ENCODE measurements at regions of chr5 and their contacts with region 1.

Region 1: DNA sequence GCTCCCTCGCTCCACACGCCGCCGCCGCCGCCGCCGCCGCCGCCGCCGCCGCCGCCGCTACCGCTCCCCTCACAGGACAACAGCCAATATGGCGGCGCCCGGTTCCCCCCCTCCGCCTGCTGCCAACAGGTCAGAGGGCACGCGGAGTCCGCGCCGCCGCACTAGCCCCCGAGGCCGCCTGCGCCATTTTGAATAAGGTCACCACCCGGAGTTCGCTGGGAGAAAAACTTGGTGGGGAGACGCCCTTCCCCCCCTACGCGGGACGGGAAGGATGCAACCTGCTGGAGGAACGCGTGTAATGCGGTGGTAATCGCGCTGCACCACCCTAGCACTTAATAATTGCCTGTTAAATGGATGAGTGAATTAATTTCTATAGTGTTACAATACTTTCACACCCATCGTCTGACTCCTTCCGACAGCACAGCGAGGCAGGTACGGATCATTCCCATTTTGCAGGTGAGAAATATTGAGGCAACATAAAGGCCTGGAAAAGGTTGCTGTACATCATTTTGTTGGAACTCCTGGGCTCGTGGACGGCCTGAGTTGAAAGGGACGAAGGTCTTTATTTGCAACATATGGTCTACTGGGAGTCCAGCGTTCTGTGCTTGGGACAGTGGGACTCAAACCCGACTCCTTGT is at the start of gene FAM193B:
- DNase-seq: peak; percentile 88 to 97 (median 94)
- ATAC-seq: peak; percentile 99
- H3K4me3 ChIP-seq: peak within 1 kb of the TSS; percentile 62 to 80
- H3K4me3 Mint-ChIP-seq: peak within 1 kb of the TSS; percentile 89
- H3K27ac ChIP-seq: peak within 1 kb of the TSS; percentile 38 to 49
- H3K27ac Mint-ChIP-seq: peak within 1 kb of the TSS; percentile 82
- H3K4me1 ChIP-seq: peaks cover 20% of the 10 kb centered on the region
- H3K4me1 Mint-ChIP-seq: peaks cover 34% of the 10 kb centered on the region
- H3K27me3 ChIP-seq: no peaks in the 10 kb centered on the region
- H3K27me3 Mint-ChIP-seq: no peaks in the 10 kb centered on the region
- CTCF ChIP-seq: no peak
- total RNA-seq, gene FAM193B: 136 to 141 TPM

Region 2: DNA sequence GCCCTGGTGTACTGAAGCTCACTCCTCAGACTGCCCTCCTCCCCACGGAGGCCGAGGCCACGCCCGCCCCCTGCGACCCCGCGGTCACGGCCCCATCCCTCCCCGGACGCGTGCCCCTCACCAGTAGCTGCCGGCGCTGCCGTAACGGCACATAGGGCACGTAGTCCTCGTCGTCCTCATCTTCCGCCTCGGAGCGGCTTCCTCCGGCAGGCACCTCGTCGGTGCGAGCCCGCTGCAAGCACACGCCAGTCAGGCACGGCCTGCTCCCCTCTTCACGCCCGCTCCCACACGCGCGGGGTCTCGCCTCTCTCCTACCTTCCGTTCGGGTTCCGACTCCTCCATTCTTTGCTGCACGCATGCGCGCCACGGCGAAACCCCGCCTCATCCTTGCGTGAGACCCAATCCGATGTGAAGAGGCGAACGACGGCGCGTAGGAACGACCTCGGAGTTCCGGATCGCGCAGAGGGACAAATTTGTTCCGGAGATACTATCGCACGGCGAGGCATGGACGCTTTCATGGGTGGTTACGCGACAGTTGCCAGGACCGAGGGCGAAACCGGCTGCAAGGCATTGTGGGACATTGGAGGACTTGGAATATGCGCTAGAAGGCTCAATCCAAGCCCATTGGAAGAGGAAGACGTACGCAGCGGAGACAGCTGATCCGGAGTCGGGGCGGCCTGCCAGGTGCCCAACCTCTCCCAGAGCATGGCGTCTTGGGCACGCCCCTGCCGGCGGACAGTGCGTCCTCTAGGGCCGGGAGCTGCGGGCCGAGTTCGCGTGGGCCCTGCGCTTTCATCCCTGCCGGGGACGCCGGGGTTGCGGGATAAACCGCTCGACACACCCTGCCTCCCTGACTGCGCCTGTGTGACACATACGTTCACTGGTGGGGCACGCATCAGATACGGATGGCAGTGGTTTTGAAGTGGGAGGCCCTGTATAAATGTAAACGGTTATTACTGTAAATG is 37.7 kb before region 1 on chr5 and contains the start of gene DDX41:
- CTCF ChIA-PET with region 1: no interaction called
- POLR2A ChIA-PET with region 1: no interaction called
- intact Hi-C with region 1: loop called (anchors 1 kb)
- DNase-seq: peak; percentile 88 to 98 (median 95)
- ATAC-seq: peak; percentile 88
- H3K4me3 ChIP-seq: peak within 1 kb of the TSS; percentile 95
- H3K4me3 Mint-ChIP-seq: peak within 1 kb of the TSS; percentile 94
- H3K27ac ChIP-seq: peak within 1 kb of the TSS; percentile 61 to 73
- H3K27ac Mint-ChIP-seq: peak within 1 kb of the TSS; percentile 93
- H3K4me1 ChIP-seq: peaks cover 31% of the 10 kb centered on the region
- H3K4me1 Mint-ChIP-seq: peaks cover 46% of the 10 kb centered on the region
- H3K27me3 ChIP-seq: no peaks in the 10 kb centered on the region
- H3K27me3 Mint-ChIP-seq: no peaks in the 10 kb centered on the region
- CTCF ChIP-seq: no peak
- total RNA-seq, gene DDX41: 66.8 to 71.0 TPM

Region 3: GRCh38 chr5:177539411-177539810 is 15.2 kb before region 1 on chr5:
- CTCF ChIA-PET with region 1: no interaction called
- POLR2A ChIA-PET with region 1: no interaction called
- intact Hi-C with region 1: no loop called
- DNase-seq: no peak
- ATAC-seq: no peak
- H3K4me3 ChIP-seq: no peak overlapping the region
- H3K4me3 Mint-ChIP-seq: no peak overlapping the region
- H3K27ac ChIP-seq: no peak overlapping the region
- H3K27ac Mint-ChIP-seq: no peak overlapping the region
- H3K4me1 ChIP-seq: no peaks in the 10 kb centered on the region
- H3K4me1 Mint-ChIP-seq: peaks cover 12% of the 10 kb centered on the region
- H3K27me3 ChIP-seq: no peaks in the 10 kb centered on the region
- H3K27me3 Mint-ChIP-seq: no peaks in the 10 kb centered on the region
- CTCF ChIP-seq: no peak

Region 4: DNA sequence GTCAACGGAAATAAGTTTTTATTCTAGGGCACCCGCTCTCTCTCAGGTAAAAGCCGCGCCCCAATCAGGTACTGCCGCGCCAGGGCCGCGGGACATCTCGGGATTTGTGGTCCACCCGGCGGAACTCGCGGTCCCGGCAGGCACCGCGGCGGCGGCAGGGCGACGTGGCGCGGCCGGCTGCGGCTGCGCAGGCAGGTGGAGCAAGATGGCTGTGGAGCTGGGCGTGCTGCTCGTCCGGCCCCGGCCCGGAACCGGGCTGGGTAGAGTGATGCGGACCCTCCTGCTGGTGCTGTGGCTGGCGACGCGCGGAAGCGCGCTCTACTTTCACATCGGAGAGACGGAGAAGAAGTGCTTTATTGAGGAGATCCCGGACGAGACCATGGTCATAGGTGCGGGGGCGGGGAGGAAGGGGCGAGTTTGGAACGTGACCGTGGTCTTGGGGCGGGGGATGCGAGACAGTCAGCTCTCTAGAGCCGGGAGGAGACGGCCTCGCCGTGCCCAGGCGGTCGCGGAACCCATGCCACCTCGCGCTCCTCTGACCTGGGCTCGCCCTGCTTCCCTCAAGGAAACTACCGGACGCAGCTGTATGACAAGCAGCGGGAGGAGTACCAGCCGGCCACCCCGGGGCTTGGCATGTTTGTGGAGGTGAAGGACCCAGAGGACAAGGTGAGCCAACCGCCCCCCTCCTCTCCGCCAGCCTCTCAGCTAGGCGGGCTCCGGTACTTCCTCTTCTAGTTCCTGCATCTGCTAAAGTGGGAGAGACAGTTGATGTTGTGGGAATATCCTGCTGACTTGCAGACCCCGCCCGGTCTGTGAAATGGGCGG is 37.6 kb after region 1 on chr5 and contains the start of gene TMED9:
- CTCF ChIA-PET with region 1: no interaction called
- POLR2A ChIA-PET with region 1: no interaction called
- intact Hi-C with region 1: loop called (anchors 1 to 2 kb)
- DNase-seq: peak; percentile 69 to 92 (median 86)
- ATAC-seq: peak; percentile 98
- H3K4me3 ChIP-seq: peak within 1 kb of the TSS; percentile 97 to 100
- H3K4me3 Mint-ChIP-seq: peak within 1 kb of the TSS; percentile 99
- H3K27ac ChIP-seq: peak within 1 kb of the TSS; percentile 78 to 88
- H3K27ac Mint-ChIP-seq: peak within 1 kb of the TSS; percentile 93
- H3K4me1 ChIP-seq: peaks cover 19% of the 10 kb centered on the region
- H3K4me1 Mint-ChIP-seq: peaks cover 24% of the 10 kb centered on the region
- H3K27me3 ChIP-seq: peaks cover 0 to 3% of the 10 kb centered on the region in 2 experiments
- H3K27me3 Mint-ChIP-seq: peaks cover 13% of the 10 kb centered on the region
- CTCF ChIP-seq: no peak
- total RNA-seq, gene TMED9: 42.4 to 52.2 TPM

Region 5: DNA sequence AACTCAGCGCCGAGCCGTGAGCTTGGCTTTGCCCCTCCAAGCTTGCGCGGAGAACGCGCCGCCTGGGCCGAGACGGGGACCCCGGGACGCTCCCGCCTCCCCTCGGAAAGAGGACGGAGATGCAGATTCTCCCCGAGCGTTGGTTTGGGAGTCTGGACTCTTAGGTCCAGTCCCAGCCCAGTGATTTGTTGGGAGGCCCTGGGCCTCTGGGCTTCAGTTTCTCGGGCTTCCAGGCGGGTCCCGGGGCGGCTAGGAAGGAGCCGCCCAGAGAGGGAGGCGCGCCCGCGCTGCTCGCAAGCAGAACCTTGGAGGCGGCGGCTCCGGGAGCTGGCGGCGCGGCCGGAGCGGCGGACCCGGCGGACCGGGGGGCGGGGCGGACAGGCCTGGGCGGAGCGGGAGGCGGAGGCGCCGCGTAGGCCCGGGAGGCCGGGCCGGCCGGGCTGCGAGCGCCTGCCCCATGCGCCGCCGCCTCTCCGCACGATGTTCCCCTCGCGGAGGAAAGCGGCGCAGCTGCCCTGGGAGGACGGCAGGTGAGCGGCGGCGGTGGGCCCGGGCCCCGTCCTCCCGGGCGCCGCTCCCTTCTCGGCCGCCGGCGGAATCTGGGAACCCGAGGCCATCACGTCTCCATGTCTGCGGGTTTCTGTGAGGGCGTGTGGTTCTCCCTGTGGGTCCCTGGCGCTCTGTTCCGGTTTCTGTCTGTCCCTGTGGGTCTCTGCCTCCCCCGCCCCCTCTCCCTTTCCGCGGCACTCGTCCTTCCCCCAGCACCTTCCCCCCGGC is 45.3 kb after region 1 on chr5 and contains the start of gene B4GALT7:
- CTCF ChIA-PET with region 1: no interaction called
- POLR2A ChIA-PET with region 1: no interaction called
- intact Hi-C with region 1: loop called in 1 of 2 experiments (anchors 2 kb)
- DNase-seq: peak; percentile 73 to 94 (median 82)
- ATAC-seq: peak; percentile 91
- H3K4me3 ChIP-seq: peak within 1 kb of the TSS; percentile 90 to 92
- H3K4me3 Mint-ChIP-seq: peak within 1 kb of the TSS; percentile 90
- H3K27ac ChIP-seq: peak within 1 kb of the TSS; percentile 65 to 78
- H3K27ac Mint-ChIP-seq: peak within 1 kb of the TSS; percentile 83
- H3K4me1 ChIP-seq: peaks cover 13% of the 10 kb centered on the region
- H3K4me1 Mint-ChIP-seq: peaks cover 29% of the 10 kb centered on the region
- H3K27me3 ChIP-seq: no peaks in the 10 kb centered on the region
- H3K27me3 Mint-ChIP-seq: no peaks in the 10 kb centered on the region
- CTCF ChIP-seq: no peak
- total RNA-seq, gene B4GALT7: 33.4 to 36.6 TPM

Region 6: DNA sequence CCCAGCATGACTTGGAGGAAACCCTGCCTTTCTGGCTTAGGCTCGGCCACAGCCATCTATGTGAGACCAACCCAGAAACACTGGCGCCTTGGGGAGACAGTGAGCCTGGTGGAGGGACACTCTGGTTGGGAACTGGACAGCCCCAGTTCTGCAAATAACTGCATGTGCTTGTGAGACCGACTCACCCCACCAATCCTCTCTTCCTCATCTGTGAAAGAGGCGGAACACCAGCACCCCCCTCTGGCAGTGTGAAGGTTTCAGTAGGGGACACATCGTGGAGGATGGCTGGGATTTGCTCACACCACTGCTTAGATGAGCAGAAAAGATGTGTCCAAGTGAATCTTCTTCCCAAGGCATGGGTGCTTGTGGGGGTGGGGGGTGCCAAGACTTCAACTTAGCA is 515.3 kb after region 1 on chr5:
- CTCF ChIA-PET with region 1: no interaction called
- POLR2A ChIA-PET with region 1: no interaction called
- intact Hi-C with region 1: loop called in 1 of 2 experiments (anchors 10 kb)
- DNase-seq: peak in 7 of 9 experiments; percentile 15 to 62 (median 43)
- ATAC-seq: peak; percentile 57
- H3K4me3 ChIP-seq: no peak overlapping the region
- H3K4me3 Mint-ChIP-seq: no peak overlapping the region
- H3K27ac ChIP-seq: no peak overlapping the region
- H3K27ac Mint-ChIP-seq: no peak overlapping the region
- H3K4me1 ChIP-seq: peaks cover 17% of the 10 kb centered on the region
- H3K4me1 Mint-ChIP-seq: peaks cover 28% of the 10 kb centered on the region
- H3K27me3 ChIP-seq: peaks cover 0 to 3% of the 10 kb centered on the region in 2 experiments
- H3K27me3 Mint-ChIP-seq: no peaks in the 10 kb centered on the region
- CTCF ChIP-seq: peak; percentile 19

Measured in CD8-positive, alpha-beta T cell (primary cell).